Activated CD4-positive, alpha-beta memory T cell treated with anti-CD3 and anti-CD28 coated beads for 36 hours (primary cell): ENCODE measurements at regions of chr2 and their contacts with region 1.

Region 1: GRCh38 chr2:162301151-162301804 is 17.2 kb downstream of the IFIH1 start:
- DNase-seq: peak; percentile 68
- H3K4me3 Mint-ChIP-seq: no peak overlapping the region
- H3K27ac Mint-ChIP-seq: no peak overlapping the region
- H3K4me1 Mint-ChIP-seq: no peaks in the 10 kb centered on the region
- H3K27me3 Mint-ChIP-seq: no peaks in the 10 kb centered on the region

Region 2: DNA sequence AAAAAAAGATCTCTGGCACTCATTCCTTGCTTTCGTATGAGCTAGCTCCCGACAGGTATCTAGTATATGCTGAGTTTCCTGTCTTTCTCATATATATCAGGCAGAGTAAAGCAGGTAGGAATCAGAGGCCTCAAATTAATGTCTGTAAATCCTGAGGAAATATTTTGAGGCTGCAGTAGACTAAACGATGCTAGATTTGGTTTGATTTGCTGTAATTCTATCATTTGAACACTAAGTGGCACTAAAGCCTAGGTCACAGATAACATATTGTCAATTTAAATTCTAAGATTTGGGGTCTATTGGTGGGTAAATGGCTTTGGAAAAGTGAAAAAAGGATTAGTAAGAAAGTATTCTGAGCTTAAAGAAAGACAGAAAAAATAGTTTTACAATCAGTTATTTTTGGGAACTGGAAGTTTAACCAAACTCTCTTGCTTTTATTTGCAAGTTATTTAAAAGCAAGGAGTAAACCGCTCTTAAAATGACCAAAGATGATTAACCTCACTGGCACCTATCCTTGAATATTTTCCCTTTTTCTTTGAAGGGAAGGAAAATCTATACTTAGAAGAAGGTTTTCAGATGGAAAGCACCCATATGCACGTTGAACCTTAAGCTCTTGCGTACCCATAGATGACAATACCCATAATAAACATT is 714.6 kb before region 1 on chr2:
- CTCF ChIA-PET with region 1: interaction called, 19 read pairs
- POLR2A ChIA-PET with region 1: no interaction called
- intact Hi-C with region 1: loop called (anchors 5 kb)
- DNase-seq: no peak
- H3K4me3 Mint-ChIP-seq: no peak overlapping the region
- H3K27ac Mint-ChIP-seq: no peak overlapping the region
- H3K4me1 Mint-ChIP-seq: no peaks in the 10 kb centered on the region
- H3K27me3 Mint-ChIP-seq: no peaks in the 10 kb centered on the region

Region 3: GRCh38 chr2:162221064-162221463 is 80.2 kb before region 1 on chr2:
- CTCF ChIA-PET with region 1: interaction called, 321 read pairs
- POLR2A ChIA-PET with region 1: no interaction called
- intact Hi-C with region 1: loop called (anchors 1 kb)
- DNase-seq: peak; percentile 74
- H3K4me3 Mint-ChIP-seq: no peak overlapping the region
- H3K27ac Mint-ChIP-seq: no peak overlapping the region
- H3K4me1 Mint-ChIP-seq: no peaks in the 10 kb centered on the region
- H3K27me3 Mint-ChIP-seq: peaks cover 6% of the 10 kb centered on the region

Region 4: GRCh38 chr2:162244541-162245031 is 56.7 kb before region 1 on chr2:
- CTCF ChIA-PET with region 1: interaction called, 11 read pairs
- POLR2A ChIA-PET with region 1: no interaction called
- intact Hi-C with region 1: no loop called
- DNase-seq: no peak
- H3K4me3 Mint-ChIP-seq: no peak overlapping the region
- H3K27ac Mint-ChIP-seq: no peak overlapping the region
- H3K4me1 Mint-ChIP-seq: no peaks in the 10 kb centered on the region
- H3K27me3 Mint-ChIP-seq: peaks cover 14% of the 10 kb centered on the region

Region 5: GRCh38 chr2:162282765-162283425 is 18.4 kb before region 1 on chr2:
- CTCF ChIA-PET with region 1: interaction called, 43 read pairs
- POLR2A ChIA-PET with region 1: interaction called, 3 read pairs
- intact Hi-C with region 1: no loop called
- DNase-seq: no peak
- H3K4me3 Mint-ChIP-seq: no peak overlapping the region
- H3K27ac Mint-ChIP-seq: no peak overlapping the region
- H3K4me1 Mint-ChIP-seq: no peaks in the 10 kb centered on the region
- H3K27me3 Mint-ChIP-seq: no peaks in the 10 kb centered on the region

Region 6: GRCh38 chr2:162318328-162319180 is 17.3 kb after region 1 on chr2 and contains the start of gene IFIH1:
- CTCF ChIA-PET with region 1: interaction called, 20 read pairs
- POLR2A ChIA-PET with region 1: interaction called, 5 read pairs
- intact Hi-C with region 1: loop called (anchors 1 kb)
- DNase-seq: peak; percentile 87
- H3K4me3 Mint-ChIP-seq: peak within 1 kb of the TSS; percentile 85
- H3K27ac Mint-ChIP-seq: peak within 1 kb of the TSS; percentile 95
- H3K4me1 Mint-ChIP-seq: peaks cover 55% of the 10 kb centered on the region
- H3K27me3 Mint-ChIP-seq: no peaks in the 10 kb centered on the region
- total RNA-seq, gene IFIH1: 33.3 to 34.2 TPM